Activated CD4-positive, alpha-beta memory T cell treated with anti-CD3 and anti-CD28 coated beads for 36 hours (primary cell): ENCODE measurements at regions of chr14 and their contacts with region 1.

Region 1: GRCh38 chr14:67599698-67600561 is at the start of gene PIGH:
- DNase-seq: peak; percentile 96
- H3K4me3 Mint-ChIP-seq: peak within 1 kb of the TSS; percentile 95
- H3K27ac Mint-ChIP-seq: peak within 1 kb of the TSS; percentile 88
- H3K4me1 Mint-ChIP-seq: peaks cover 34% of the 10 kb centered on the region
- H3K27me3 Mint-ChIP-seq: no peaks in the 10 kb centered on the region
- total RNA-seq, gene PIGH: 13.1 to 17.1 TPM

Region 2: GRCh38 chr14:67359775-67360648 is 239.9 kb before region 1 on chr14 and contains the starts of genes ATP6V1D and EIF2S1:
- CTCF ChIA-PET with region 1: interaction called, 3 read pairs
- POLR2A ChIA-PET with region 1: no interaction called
- intact Hi-C with region 1: loop called (anchors 1 kb)
- DNase-seq: peak; percentile 100
- H3K4me3 Mint-ChIP-seq: peak within 1 kb of the TSS; percentile 99
- H3K27ac Mint-ChIP-seq: peak within 1 kb of the TSS; percentile 98
- H3K4me1 Mint-ChIP-seq: peaks cover 62% of the 10 kb centered on the region
- H3K27me3 Mint-ChIP-seq: peaks cover 2% of the 10 kb centered on the region
- total RNA-seq, gene ATP6V1D: 28.3 to 31.7 TPM
- total RNA-seq, gene EIF2S1: 238 to 240 TPM

Region 3: GRCh38 chr14:67583711-67584644 is 16.0 kb before region 1 on chr14:
- CTCF ChIA-PET with region 1: interaction called, 18 read pairs
- POLR2A ChIA-PET with region 1: interaction called, 6 read pairs
- intact Hi-C with region 1: no loop called
- DNase-seq: peak; percentile 32
- H3K4me3 Mint-ChIP-seq: no peak overlapping the region
- H3K27ac Mint-ChIP-seq: no peak overlapping the region
- H3K4me1 Mint-ChIP-seq: no peaks in the 10 kb centered on the region
- H3K27me3 Mint-ChIP-seq: no peaks in the 10 kb centered on the region

Region 4: GRCh38 chr14:67619446-67620216 is 19.7 kb after region 1 on chr14 and contains the start of gene ARG2:
- CTCF ChIA-PET with region 1: interaction called, 19 read pairs
- POLR2A ChIA-PET with region 1: interaction called, 6 read pairs
- intact Hi-C with region 1: loop called (anchors 1 kb)
- DNase-seq: peak; percentile 98
- H3K4me3 Mint-ChIP-seq: peak within 1 kb of the TSS; percentile 84
- H3K27ac Mint-ChIP-seq: no peak within 1 kb of the TSS
- H3K4me1 Mint-ChIP-seq: peaks cover 26% of the 10 kb centered on the region
- H3K27me3 Mint-ChIP-seq: peaks cover 15% of the 10 kb centered on the region
- total RNA-seq, gene ARG2: 6.8 to 7.6 TPM

Region 5: DNA sequence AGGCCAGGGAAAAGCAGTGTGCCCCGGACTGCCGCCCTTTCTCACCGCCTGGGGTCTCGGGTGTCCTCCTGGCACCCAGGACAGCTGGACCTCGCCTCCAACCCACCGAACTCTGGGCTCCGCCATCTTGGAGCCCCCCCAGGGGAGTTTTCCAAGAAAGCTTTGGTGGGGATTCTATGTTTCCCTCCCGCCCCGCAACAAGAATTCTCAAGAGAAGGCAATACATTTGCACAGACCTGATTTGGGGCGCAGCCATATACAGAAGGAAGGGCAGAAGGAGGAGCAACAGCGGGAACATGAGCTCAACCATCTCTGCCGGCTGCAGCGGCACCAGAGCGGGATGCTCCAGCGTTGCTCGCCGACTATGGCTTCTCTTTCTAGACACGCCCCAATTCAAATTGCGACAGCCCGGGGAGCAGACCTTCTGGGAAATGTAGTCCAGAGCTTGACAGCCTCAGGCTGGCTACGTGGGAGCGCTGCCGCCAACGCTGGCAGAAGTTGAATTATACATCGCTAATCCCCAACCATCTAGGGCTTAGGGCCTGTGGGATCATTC is 95.5 kb after region 1 on chr14 and contains the start of gene RDH11:
- CTCF ChIA-PET with region 1: interaction called, 5 read pairs
- POLR2A ChIA-PET with region 1: interaction called, 10 read pairs
- intact Hi-C with region 1: loop called (anchors 1 kb)
- DNase-seq: peak; percentile 91
- H3K4me3 Mint-ChIP-seq: peak within 1 kb of the TSS; percentile 90
- H3K27ac Mint-ChIP-seq: peak within 1 kb of the TSS; percentile 93
- H3K4me1 Mint-ChIP-seq: peaks cover 24% of the 10 kb centered on the region
- H3K27me3 Mint-ChIP-seq: no peaks in the 10 kb centered on the region
- total RNA-seq, gene RDH11: 70.9 to 76.7 TPM

Region 6: GRCh38 chr14:67722293-67722692 is 122.4 kb after region 1 on chr14:
- CTCF ChIA-PET with region 1: no interaction called
- POLR2A ChIA-PET with region 1: no interaction called
- intact Hi-C with region 1: no loop called
- DNase-seq: no peak
- H3K4me3 Mint-ChIP-seq: no peak overlapping the region
- H3K27ac Mint-ChIP-seq: no peak overlapping the region
- H3K4me1 Mint-ChIP-seq: peaks cover 7% of the 10 kb centered on the region
- H3K27me3 Mint-ChIP-seq: peaks cover 32% of the 10 kb centered on the region

Region 7: DNA sequence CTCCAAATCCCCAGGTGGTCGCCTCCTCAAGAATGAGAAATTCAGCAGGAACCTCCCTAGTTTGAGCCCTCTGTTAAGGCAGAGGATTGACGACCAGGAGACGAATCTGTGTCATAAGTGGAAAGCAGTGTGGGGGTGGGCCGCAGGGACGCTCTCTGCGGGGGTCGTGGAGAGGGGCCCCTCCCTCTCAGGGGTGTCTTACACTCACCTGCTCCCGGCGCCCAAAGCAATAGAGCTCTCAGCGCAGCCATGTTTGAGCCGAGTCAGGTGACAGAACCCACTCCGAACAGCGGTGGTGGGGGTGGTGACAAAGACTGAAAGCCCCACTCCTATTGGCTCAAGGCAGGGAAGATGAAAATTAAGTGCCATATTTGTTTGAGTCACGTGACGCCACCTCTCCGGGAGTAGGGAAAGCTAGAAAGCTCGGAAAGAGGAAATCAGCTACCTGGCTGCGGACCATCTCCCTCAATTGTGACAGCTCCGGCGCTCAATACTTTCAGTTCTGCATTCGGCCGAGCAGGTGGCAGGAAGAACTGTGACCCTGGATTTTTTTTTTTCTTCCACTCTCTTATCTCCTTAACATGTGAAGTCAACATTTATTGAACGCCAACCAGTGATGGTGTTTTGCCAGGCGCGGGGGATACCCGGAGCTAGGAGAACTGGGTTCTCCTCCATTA is 216.5 kb after region 1 on chr14 and contains the start of gene ZFYVE26:
- CTCF ChIA-PET with region 1: no interaction called
- POLR2A ChIA-PET with region 1: interaction called, 8 read pairs
- intact Hi-C with region 1: loop called (anchors 5 kb)
- DNase-seq: peak; percentile 95
- H3K4me3 Mint-ChIP-seq: peak within 1 kb of the TSS; percentile 93
- H3K27ac Mint-ChIP-seq: peak within 1 kb of the TSS; percentile 90
- H3K4me1 Mint-ChIP-seq: peaks cover 50% of the 10 kb centered on the region
- H3K27me3 Mint-ChIP-seq: no peaks in the 10 kb centered on the region
- total RNA-seq, gene ZFYVE26: 12.5 to 12.6 TPM

Region 8: DNA sequence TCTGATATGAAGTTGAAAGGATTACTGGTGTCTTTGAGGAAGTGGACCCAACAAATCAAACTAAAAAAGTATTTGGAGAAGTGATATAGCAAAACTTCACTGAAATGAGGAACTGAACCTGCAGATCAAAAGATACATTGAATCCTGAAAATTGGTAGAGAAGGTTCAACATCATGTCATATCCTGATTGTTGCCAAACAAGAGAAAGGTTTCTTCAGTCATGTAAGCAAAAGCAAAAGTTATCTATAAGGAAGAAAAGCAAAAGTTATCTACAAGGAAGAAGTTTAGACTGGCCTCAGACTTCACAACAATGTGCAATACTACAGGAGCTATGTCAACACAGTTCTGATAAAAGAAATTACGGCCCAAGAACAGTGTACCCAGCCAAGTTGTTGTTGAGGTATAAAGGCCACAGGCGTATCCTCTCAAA is 362.3 kb after region 1 on chr14:
- CTCF ChIA-PET with region 1: no interaction called
- POLR2A ChIA-PET with region 1: no interaction called
- intact Hi-C with region 1: no loop called
- DNase-seq: no peak
- H3K4me3 Mint-ChIP-seq: no peak overlapping the region
- H3K27ac Mint-ChIP-seq: no peak overlapping the region
- H3K4me1 Mint-ChIP-seq: no peaks in the 10 kb centered on the region
- H3K27me3 Mint-ChIP-seq: no peaks in the 10 kb centered on the region